AG04449 (cell line): ENCODE measurements at regions of chr6 and their contacts with region 1.

Region 1: GRCh38 chr6:31079656-31080261 is 32.6 kb downstream of the C6orf15 start:
- DNase-seq: no peak
- H3K4me3 ChIP-seq: peak overlapping the region; percentile 13; the same call in 1 of the 2 replicates
- CTCF ChIP-seq: peak; percentile 68

Region 2: GRCh38 chr6:30590994-30591393 is 488.8 kb before region 1 on chr6:
- CTCF ChIA-PET with region 1: no interaction called
- POLR2A ChIA-PET with region 1: no interaction called
- DNase-seq: no peak
- H3K4me3 ChIP-seq: no peak overlapping the region
- CTCF ChIP-seq: no peak

Region 3: GRCh38 chr6:30828027-30828960 is 251.5 kb before region 1 on chr6:
- CTCF ChIA-PET with region 1: interaction called, 78 read pairs
- POLR2A ChIA-PET with region 1: no interaction called
- DNase-seq: peak; percentile 70
- H3K4me3 ChIP-seq: no peak overlapping the region
- CTCF ChIP-seq: peak; percentile 90

Region 4: GRCh38 chr6:30877419-30878371 is 202.1 kb before region 1 on chr6:
- CTCF ChIA-PET with region 1: interaction called, 14 read pairs
- POLR2A ChIA-PET with region 1: no interaction called
- DNase-seq: peak; percentile 62
- H3K4me3 ChIP-seq: peak overlapping the region; percentile 39
- CTCF ChIP-seq: peak; percentile 85

Region 5: DNA sequence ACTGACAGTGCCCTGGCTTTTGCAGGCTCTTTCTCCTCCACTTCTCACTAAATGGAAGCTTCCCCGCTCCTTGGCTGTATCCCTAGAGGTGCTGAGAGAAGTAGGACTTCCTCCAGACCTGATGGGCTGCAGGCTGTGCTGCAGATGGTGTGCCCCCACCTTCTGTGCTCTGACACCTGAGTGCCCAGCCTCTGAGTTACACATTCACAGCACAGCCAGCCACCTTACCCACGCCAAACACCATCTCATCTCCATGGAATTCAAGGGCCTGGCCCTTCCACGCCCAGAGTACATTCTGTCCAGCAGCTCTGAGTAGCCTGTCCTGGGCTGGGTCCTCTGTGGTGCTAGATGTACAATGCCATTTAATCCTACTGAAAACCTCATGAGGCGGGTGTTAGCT is 153.1 kb before region 1 on chr6:
- CTCF ChIA-PET with region 1: interaction called, 1,346 read pairs
- POLR2A ChIA-PET with region 1: no interaction called
- DNase-seq: no peak
- H3K4me3 ChIP-seq: no peak overlapping the region
- CTCF ChIP-seq: no peak

Region 6: GRCh38 chr6:30942338-30943060 is 137.3 kb before region 1 on chr6:
- CTCF ChIA-PET with region 1: interaction called, 31 read pairs
- POLR2A ChIA-PET with region 1: no interaction called
- DNase-seq: peak; percentile 17
- H3K4me3 ChIP-seq: no peak overlapping the region
- CTCF ChIP-seq: peak; percentile 77

Region 7: DNA sequence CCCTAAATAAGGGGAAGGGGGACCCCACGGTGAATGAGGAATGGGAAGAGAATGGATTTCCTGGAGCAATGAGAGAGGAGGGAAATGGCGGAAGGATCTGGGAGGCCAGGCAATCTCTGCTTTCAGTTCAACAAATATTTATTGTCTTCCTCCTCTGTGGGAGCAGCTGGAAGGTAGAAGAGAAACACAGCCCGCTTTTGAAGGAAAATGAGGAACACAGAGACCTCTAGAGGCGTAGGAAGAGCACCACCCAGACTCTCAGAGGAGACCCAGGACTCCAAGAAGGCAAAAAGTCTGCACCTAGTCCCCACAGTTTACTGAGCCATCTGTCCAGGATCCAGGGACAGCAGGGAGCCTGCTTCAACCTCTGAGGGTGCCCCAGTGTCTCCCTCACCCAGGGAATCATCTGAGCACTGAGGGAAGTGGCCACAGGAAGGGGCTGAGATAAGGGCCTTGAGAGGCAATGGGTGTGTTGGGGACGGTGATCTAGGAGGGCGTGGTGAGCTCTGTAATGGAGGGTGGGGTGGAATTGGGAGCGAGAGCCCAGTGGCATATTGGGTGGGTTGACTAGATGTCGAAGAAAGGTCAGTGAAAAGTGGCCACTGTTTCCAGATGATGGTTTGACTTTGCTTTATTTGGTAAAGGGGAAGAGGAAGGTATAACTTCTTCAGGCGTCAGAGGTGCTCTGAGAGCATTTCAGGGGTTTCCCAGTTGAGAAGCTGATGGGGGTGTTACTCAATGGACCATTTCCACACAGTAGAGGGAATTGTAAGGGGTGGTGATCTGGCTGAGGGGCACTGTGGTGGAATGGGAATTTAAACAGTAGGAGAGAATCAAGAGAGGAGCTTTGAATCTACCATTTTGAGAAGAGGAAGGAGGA is 35.5 kb after region 1 on chr6:
- CTCF ChIA-PET with region 1: interaction called, 30 read pairs
- POLR2A ChIA-PET with region 1: no interaction called
- DNase-seq: no peak
- H3K4me3 ChIP-seq: peak overlapping the region; percentile 25
- CTCF ChIP-seq: peak; percentile 35

Region 8: GRCh38 chr6:31158140-31158862 is 78.5 kb after region 1 on chr6 and contains the start of gene TCF19:
- CTCF ChIA-PET with region 1: no interaction called
- POLR2A ChIA-PET with region 1: no interaction called
- DNase-seq: peak; percentile 91
- H3K4me3 ChIP-seq: peak within 1 kb of the TSS; percentile 84
- CTCF ChIP-seq: no peak

Region 9: DNA sequence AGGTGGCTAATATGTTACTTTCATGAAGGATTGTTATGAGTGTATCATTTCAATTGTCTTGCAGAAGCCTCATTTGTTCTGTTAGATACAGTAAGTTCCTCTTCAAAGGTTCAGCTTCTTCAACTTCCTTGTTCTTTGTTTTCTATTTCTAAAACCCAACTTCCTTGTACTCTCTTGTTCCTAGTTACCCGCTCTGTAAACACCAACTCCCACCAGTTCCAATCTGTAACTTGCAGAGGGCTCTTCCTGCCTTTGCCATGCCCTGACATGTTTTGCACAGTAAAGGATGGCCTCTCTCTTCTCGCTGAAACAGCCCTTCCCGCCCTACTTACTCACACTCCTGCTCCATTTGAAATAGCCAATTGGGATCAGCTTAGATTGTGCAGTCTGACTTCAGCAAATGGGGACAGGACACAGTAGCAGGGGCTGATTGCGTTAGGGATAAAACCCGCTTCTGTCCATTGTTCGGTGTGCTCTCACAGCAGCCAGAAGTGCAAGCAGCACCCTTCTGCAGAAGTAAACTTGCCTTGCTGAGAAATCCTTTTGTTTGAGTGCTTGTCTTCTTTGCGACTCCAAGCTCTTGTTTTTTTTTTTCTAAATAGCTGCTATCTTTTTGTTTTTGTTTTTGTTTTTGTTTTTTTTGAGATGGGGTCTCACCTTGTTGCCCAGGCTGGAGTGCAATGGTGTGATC is 136.6 kb after region 1 on chr6:
- CTCF ChIA-PET with region 1: no interaction called
- POLR2A ChIA-PET with region 1: no interaction called
- DNase-seq: no peak
- H3K4me3 ChIP-seq: no peak overlapping the region
- CTCF ChIP-seq: no peak

Region 10: DNA sequence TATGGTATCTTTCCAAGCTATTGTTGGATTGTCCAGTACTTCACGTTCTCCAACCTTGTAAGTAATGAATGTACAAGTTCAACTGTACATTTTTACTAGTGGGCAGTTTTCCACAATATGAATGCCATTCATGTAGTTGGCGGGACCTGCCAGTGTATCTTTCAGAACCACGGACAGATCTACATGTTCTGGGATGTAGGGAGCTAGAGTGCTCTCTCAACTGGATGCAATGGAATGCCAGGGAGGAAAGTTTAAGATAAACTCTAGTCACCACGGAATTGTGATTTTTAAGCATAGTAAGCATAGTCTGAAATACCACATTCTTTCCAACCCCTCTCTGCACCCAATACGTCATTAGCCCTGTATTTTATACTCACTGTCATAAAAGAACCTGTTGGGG is 213.6 kb after region 1 on chr6:
- CTCF ChIA-PET with region 1: no interaction called
- POLR2A ChIA-PET with region 1: no interaction called
- DNase-seq: no peak
- H3K4me3 ChIP-seq: no peak overlapping the region
- CTCF ChIP-seq: no peak